ENCODE measurements at regions of chr17 and their contacts with region 1.

Region 1: GRCh38 chr17:15307710-15308111 is 33.7 kb downstream of the TEKT3 start:
- DNase-seq: peak; percentile 90
- H3K4me3 ChIP-seq: no peak overlapping the region
- H3K27ac ChIP-seq: peak overlapping the region in 3 of 4 donors; percentile 68 to 78 (median 73)
- H3K4me1 ChIP-seq: peaks cover 3 to 63% (median 55%) of the 10 kb centered on the region in 4 donors
- H3K27me3 ChIP-seq: no peaks in the 10 kb centered on the region
- CTCF ChIP-seq: no peak
- EP300 ChIP-seq: peak; percentile 87 to 95 (median 90)
- POLR2A ChIP-seq: no peak

Region 2: GRCh38 chr17:15278924-15279477 is 28.7 kb before region 1 on chr17:
- intact Hi-C with region 1: no loop called
- DNase-seq: no peak
- H3K4me3 ChIP-seq: no peak overlapping the region
- H3K27ac ChIP-seq: no peak overlapping the region
- H3K4me1 ChIP-seq: no peaks in the 10 kb centered on the region
- H3K27me3 ChIP-seq: no peaks in the 10 kb centered on the region
- CTCF ChIP-seq: no peak
- EP300 ChIP-seq: no peak
- POLR2A ChIP-seq: no peak

Region 3: GRCh38 chr17:15341385-15341849 is 33.7 kb after region 1 on chr17 and contains the start of gene TEKT3:
- intact Hi-C with region 1: loop called (anchors 2 kb)
- DNase-seq: peak; percentile 95
- H3K4me3 ChIP-seq: peak within 1 kb of the TSS; percentile 35 to 63 (median 58)
- H3K27ac ChIP-seq: peak within 1 kb of the TSS in 2 of 4 donors; percentile 60 to 68
- H3K4me1 ChIP-seq: peaks cover 0 to 13% (median 6%) of the 10 kb centered on the region in 4 donors
- H3K27me3 ChIP-seq: no peaks in the 10 kb centered on the region
- CTCF ChIP-seq: no peak
- EP300 ChIP-seq: no peak
- POLR2A ChIP-seq: peak in 1 of 2 donors; percentile 11
- total RNA-seq, gene TEKT3: 1.8 TPM in 1 of 4 donors, not detected in the others

Region 4: GRCh38 chr17:15398736-15399331 is 91.1 kb after region 1 on chr17:
- intact Hi-C with region 1: loop called (anchors 5 kb)
- DNase-seq: no peak
- H3K4me3 ChIP-seq: no peak overlapping the region
- H3K27ac ChIP-seq: peak overlapping the region; percentile 25 to 70 (median 68)
- H3K4me1 ChIP-seq: peaks cover 0 to 62% (median 49%) of the 10 kb centered on the region in 4 donors
- H3K27me3 ChIP-seq: no peaks in the 10 kb centered on the region
- CTCF ChIP-seq: no peak
- EP300 ChIP-seq: no peak
- POLR2A ChIP-seq: no peak

Region 5: DNA sequence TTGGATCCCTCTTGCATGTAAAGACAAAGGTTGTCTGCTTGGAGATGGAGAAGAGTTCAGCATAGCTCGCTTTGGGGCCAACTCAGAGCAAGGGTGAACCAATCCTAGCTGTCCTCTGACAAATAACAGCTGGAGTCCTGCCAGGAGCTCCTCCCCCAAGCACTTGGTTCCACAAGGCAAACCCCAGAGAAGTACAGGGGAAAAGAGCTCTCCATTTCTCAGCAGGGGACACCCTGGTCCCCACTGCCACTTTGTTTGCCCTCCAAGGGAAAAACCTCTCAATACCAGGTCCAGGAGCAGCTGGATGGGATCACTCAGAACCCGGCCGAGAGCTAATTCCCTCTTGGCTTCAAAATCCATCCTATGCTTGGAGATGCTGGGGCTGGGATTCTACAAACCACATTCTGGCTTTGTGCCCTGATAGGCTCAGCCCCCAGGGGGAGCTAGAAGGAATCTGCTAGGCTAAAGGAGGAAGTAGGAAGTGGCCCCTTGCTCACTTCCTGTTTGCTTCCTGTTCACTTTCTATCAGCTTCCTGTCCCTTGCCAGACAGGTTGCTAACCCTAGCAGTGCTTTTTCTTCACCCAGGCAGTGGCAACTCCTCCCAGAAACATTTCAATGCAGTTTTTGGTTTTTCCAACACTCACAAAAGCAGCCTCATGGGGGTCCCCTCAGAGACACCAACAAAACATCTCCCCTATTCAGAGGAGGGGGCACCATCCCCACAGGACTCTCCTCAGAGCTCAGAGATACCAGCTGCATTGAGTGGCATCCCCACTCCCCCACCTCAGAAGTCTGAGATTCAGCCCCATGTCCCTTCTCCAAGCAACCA is 129.0 kb after region 1 on chr17:
- intact Hi-C with region 1: loop called (anchors 1 kb)
- DNase-seq: peak; percentile 91
- H3K4me3 ChIP-seq: no peak overlapping the region
- H3K27ac ChIP-seq: peak overlapping the region; percentile 30 to 83 (median 52)
- H3K4me1 ChIP-seq: peaks cover 0 to 50% (median 43%) of the 10 kb centered on the region in 4 donors
- H3K27me3 ChIP-seq: no peaks in the 10 kb centered on the region
- CTCF ChIP-seq: no peak
- EP300 ChIP-seq: no peak
- POLR2A ChIP-seq: no peak

Region 6: GRCh38 chr17:15456972-15457722 is 149.4 kb after region 1 on chr17:
- intact Hi-C with region 1: loop called (anchors 1 kb)
- DNase-seq: peak; percentile 95
- H3K4me3 ChIP-seq: no peak overlapping the region
- H3K27ac ChIP-seq: peak overlapping the region; percentile 78 to 85 (median 82)
- H3K4me1 ChIP-seq: peaks cover 0 to 50% (median 47%) of the 10 kb centered on the region in 4 donors
- H3K27me3 ChIP-seq: no peaks in the 10 kb centered on the region
- CTCF ChIP-seq: peak; percentile 39 to 56 (median 50)
- EP300 ChIP-seq: peak in 3 of 4 donors; percentile 27 to 66 (median 52)
- POLR2A ChIP-seq: no peak

Measured in sigmoid colon (tissue), 7 donors.